HepG2 (cell line): ENCODE measurements at regions of chr11 and their contacts with region 1.

Region 1: GRCh38 chr11:17276236-17277023 is at the start of gene NUCB2:
- DNase-seq: peak; percentile 91
- ATAC-seq: peak; percentile 95
- H3K4me3 ChIP-seq: peak within 1 kb of the TSS; percentile 83 to 95 (median 87)
- H3K27ac ChIP-seq: peak within 1 kb of the TSS; percentile 87
- H3K4me1 ChIP-seq: peaks cover 47% of the 10 kb centered on the region
- H3K27me3 ChIP-seq: no peaks in the 10 kb centered on the region; a peak in 1 of 5 replicates
- CTCF ChIP-seq: peak; percentile 19; the same call in 1 of the 2 replicates
- EP300 ChIP-seq: no peak
- POLR2A ChIP-seq: peak; percentile 87 to 88
- RAD21 ChIP-seq: no peak
- total RNA-seq, gene NUCB2: 51.7 and 82.4 TPM in 2 replicates

Region 2: GRCh38 chr11:17164361-17165246 is 111.8 kb before region 1 on chr11:
- CTCF ChIA-PET with region 1: no interaction called
- POLR2A ChIA-PET with region 1: no interaction called
- in situ Hi-C with region 1: no loop called
- intact Hi-C with region 1: no loop called
- DNase-seq: peak; percentile 53
- ATAC-seq: peak; percentile 59
- H3K4me3 ChIP-seq: no peak overlapping the region; a peak in 1 of 6 replicates
- H3K27ac ChIP-seq: peak overlapping the region; percentile 58
- H3K4me1 ChIP-seq: peaks cover 57% of the 10 kb centered on the region
- H3K27me3 ChIP-seq: no peaks in the 10 kb centered on the region
- CTCF ChIP-seq: no peak
- EP300 ChIP-seq: no peak
- POLR2A ChIP-seq: no peak
- RAD21 ChIP-seq: no peak

Region 3: GRCh38 chr11:17207317-17208258 is 68.8 kb before region 1 on chr11 and contains the start of gene PIK3C2A:
- CTCF ChIA-PET with region 1: no interaction called
- POLR2A ChIA-PET with region 1: interaction called, 7 read pairs
- in situ Hi-C with region 1: no loop called
- intact Hi-C with region 1: loop called (anchors 2 kb)
- DNase-seq: peak; percentile 92
- ATAC-seq: peak; percentile 94
- H3K4me3 ChIP-seq: peak within 1 kb of the TSS; percentile 89 to 92 (median 91)
- H3K27ac ChIP-seq: peak within 1 kb of the TSS; percentile 99
- H3K4me1 ChIP-seq: peaks cover 52% of the 10 kb centered on the region
- H3K27me3 ChIP-seq: no peaks in the 10 kb centered on the region; a peak in 1 of 5 replicates
- CTCF ChIP-seq: no peak
- EP300 ChIP-seq: no peak
- POLR2A ChIP-seq: peak; percentile 98
- RAD21 ChIP-seq: no peak
- total RNA-seq, gene PIK3C2A: 49.9 and 117 TPM in 2 replicates

Region 4: DNA sequence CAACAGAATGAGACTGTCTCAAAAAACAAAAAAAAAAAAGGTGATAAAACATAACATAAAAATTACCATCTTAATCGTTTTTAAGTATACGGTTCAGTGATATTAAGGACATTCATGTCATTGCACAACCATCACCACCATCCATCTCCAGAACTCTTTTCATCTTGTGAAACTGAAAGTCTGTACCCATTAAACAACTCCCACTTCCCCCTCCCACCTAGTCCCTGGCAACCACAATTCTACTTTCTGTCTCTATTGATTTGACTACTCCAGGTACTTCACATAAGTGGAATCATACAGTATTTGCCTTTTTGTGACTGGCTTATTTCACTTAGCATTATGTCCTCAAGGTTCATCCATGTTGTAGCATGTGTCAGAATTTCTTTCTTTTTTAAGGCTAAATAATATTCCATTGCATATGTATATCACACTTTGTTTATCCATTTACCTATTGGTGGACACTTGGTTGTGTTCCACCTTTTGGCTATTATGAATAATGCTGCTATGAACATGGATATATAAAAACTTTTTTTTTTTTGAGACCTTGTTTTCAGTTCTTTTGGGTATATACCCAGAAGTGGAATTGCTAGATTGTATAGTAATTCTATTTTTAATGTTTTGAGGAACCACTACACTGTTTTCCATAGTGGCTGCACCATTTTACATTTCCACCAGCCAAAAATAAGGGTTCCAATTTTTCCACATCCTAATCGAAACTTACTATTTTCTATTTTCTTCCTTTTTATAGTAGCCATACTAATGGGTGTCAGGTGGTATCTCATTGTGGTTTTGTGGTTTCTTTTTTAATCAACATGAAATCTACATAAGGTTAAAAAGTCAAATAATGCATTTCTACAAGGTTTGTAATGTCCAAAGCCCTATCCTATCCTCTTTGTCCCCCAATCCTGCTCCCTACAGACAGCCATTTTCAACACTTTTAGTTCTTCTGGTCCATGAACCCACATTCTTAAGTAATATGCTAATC is 45.3 kb before region 1 on chr11:
- CTCF ChIA-PET with region 1: no interaction called
- POLR2A ChIA-PET with region 1: no interaction called
- in situ Hi-C with region 1: no loop called
- intact Hi-C with region 1: loop called (anchors 10 kb)
- DNase-seq: no peak
- ATAC-seq: no peak
- H3K4me3 ChIP-seq: no peak overlapping the region
- H3K27ac ChIP-seq: no peak overlapping the region
- H3K4me1 ChIP-seq: 0 out of 2 replicates have a peak, but pooled peaks cover 5% of the 10 kb centered on the region
- H3K27me3 ChIP-seq: no peaks in the 10 kb centered on the region
- CTCF ChIP-seq: no peak
- EP300 ChIP-seq: no peak
- POLR2A ChIP-seq: no peak
- RAD21 ChIP-seq: no peak